ENCODE measurements at regions of chr5 and their contacts with region 1.

Region 1: DNA sequence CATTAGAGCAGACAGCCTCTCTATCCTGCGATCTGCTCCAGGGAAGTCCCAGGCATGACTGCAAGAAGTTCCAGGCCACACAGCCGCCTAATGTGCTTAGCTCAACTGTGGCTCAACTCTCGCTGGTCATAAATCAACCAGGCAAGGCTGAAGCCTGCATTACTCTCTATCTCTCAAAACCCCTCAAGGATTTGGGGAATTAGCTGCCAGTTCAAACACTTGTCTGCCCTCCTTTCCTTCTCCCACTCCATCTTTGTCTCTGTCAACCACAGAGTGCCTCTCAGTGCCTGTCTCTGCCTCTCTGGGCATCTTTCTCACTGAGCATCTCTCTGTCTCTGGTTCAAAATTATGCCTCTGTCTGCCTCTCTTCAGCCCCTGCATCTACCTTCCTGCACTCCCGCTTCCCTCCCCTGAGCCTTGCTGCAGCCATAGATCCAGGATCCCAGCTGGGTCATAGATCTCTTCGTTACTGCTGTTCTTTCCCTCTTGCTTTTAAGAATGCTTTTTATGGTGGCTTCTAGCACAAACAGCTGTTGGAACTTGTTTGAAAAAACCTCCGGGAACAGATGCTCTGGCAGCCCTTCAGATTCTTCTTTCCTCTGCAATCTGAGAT is 27.9 kb upstream of the GALNT10 start:
- DNase-seq: peak; percentile 42
- H3K4me3 ChIP-seq: no peak overlapping the region
- H3K27ac ChIP-seq: no peak overlapping the region
- H3K4me1 ChIP-seq: peaks cover 46% of the 10 kb centered on the region
- H3K27me3 ChIP-seq: no peaks in the 10 kb centered on the region
- CTCF ChIP-seq: no peak

Region 2: DNA sequence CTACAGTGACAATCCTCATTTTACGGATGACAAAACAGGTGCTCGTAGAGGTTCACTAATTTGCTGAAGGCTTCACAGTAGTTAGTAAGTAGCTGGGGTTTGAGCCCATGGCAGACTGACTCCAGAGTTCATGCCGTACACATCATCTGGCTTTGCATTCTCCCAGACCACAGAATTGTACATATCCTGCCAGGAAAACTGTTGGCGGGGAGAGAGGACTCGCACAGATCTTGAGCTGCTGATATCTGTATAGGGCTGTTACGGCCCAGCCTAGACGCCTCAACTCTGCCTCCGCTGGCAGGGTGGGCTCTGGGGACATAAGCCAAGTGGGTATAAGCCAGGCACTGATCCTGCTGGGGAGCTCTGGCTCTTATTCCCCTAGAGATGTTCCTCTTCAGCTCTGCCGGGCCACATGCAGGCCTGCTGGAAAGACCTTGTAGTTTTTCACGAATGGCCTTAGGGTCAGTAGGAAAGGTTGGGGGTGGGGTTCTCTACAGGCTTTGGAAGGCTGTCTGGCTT is 608.8 kb after region 1 on chr5:
- CTCF ChIA-PET with region 1: no interaction called
- POLR2A ChIA-PET with region 1: interaction called, 13 read pairs
- intact Hi-C with region 1: no loop called
- DNase-seq: peak; percentile 20
- H3K4me3 ChIP-seq: no peak overlapping the region
- H3K27ac ChIP-seq: peak overlapping the region; percentile 16
- H3K4me1 ChIP-seq: peaks cover 7% of the 10 kb centered on the region
- H3K27me3 ChIP-seq: no peaks in the 10 kb centered on the region
- CTCF ChIP-seq: no peak

Measured in A673 (cell line).